Ovary (tissue), 10 donors: ENCODE measurements at regions of chr6 and their contacts with region 1.

Region 1: GRCh38 chr6:148186916-148187315 is 155.7 kb upstream of the SASH1 start:
- DNase-seq: no peak
- H3K4me3 ChIP-seq: no peak overlapping the region
- H3K27ac ChIP-seq: no peak overlapping the region
- H3K4me1 ChIP-seq: peaks cover 2% of the 10 kb centered on the region
- H3K27me3 ChIP-seq: no peaks in the 10 kb centered on the region
- CTCF ChIP-seq: no peak
- EP300 ChIP-seq: no peak
- POLR2A ChIP-seq: no peak

Region 2: DNA sequence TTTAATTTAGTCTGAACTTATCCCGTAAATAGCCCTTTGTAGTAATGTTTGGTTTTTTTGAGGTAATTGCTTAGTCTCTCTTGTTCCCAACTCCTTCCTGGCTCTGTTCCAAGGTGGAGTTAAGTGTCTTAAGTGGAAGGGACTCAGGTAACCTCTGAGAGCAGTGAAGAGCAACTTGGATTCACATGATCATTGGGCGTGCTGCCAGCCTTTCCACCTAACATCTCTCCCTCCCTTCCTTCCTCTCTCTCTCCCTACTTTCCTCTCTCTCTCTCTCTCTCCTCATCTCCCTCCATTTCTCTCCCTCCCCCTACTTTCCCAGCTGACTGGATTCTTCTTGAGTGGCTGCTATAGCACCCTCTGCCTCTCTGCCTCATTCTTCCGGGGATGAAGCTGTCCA is 77.2 kb before region 1 on chr6:
- intact Hi-C with region 1: no loop called
- DNase-seq: no peak
- H3K4me3 ChIP-seq: no peak overlapping the region
- H3K27ac ChIP-seq: no peak overlapping the region
- H3K4me1 ChIP-seq: no peaks in the 10 kb centered on the region
- H3K27me3 ChIP-seq: no peaks in the 10 kb centered on the region
- CTCF ChIP-seq: no peak
- EP300 ChIP-seq: no peak
- POLR2A ChIP-seq: no peak

Region 3: GRCh38 chr6:148211846-148212245 is 24.9 kb after region 1 on chr6:
- intact Hi-C with region 1: loop called in 1 of 4 experiments (anchors 2 kb)
- DNase-seq: no peak
- H3K4me3 ChIP-seq: no peak overlapping the region
- H3K27ac ChIP-seq: no peak overlapping the region
- H3K4me1 ChIP-seq: no peaks in the 10 kb centered on the region
- H3K27me3 ChIP-seq: no peaks in the 10 kb centered on the region
- CTCF ChIP-seq: no peak
- EP300 ChIP-seq: no peak
- POLR2A ChIP-seq: no peak